ENCODE measurements at regions of chr11 and their contacts with region 1.

Region 1: DNA sequence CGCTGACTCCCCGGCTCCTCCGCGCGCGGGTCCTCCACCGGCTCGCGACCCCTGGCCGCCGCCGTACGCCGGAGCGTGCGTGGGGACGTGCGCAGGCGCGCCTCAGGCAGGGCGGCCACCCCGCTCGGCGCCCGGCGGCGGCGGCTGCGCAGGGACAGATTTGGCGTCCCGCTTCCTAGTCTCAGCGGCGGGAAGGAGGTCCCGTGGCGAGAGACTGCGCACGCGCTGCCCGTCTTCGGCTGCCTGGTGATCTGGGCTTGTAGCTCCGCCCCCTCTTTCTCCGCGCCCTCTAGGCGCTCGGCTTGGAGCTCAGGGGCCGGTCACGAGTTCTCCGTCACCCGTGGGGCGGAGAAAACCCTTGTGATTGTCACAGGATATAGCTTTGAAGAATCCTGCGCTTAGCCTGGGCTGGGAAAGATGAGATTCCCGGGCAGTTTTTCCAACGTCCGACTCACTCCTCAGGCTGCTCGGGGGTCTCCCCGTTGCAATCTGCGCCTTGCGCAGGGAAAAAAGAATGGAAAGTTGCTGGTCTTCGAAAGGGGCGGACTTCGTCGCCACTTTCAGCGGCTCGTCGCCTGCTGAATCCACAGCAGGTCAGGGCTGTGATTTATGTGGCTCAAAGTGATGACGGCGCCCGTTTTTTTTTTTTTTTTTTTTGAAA is at the start of gene PATL1:
- DNase-seq: peak; percentile 99 to 100 (median 100)
- ATAC-seq: peak; percentile 97 to 99 (median 98)
- H3K4me3 ChIP-seq: peak within 1 kb of the TSS; percentile 71 to 99 (median 90)
- H3K27ac ChIP-seq: peak within 1 kb of the TSS; percentile 82 to 99 (median 94)
- H3K4me1 ChIP-seq: peaks cover 6 to 41% (median 20%) of the 10 kb centered on the region in 12 donors
- H3K27me3 ChIP-seq: no peaks in the 10 kb centered on the region
- CTCF ChIP-seq: no peak
- POLR2A ChIP-seq: peak; percentile 9 to 89
- total RNA-seq, gene PATL1: 14.4 to 33.3 (median 24.8) TPM

Region 2: DNA sequence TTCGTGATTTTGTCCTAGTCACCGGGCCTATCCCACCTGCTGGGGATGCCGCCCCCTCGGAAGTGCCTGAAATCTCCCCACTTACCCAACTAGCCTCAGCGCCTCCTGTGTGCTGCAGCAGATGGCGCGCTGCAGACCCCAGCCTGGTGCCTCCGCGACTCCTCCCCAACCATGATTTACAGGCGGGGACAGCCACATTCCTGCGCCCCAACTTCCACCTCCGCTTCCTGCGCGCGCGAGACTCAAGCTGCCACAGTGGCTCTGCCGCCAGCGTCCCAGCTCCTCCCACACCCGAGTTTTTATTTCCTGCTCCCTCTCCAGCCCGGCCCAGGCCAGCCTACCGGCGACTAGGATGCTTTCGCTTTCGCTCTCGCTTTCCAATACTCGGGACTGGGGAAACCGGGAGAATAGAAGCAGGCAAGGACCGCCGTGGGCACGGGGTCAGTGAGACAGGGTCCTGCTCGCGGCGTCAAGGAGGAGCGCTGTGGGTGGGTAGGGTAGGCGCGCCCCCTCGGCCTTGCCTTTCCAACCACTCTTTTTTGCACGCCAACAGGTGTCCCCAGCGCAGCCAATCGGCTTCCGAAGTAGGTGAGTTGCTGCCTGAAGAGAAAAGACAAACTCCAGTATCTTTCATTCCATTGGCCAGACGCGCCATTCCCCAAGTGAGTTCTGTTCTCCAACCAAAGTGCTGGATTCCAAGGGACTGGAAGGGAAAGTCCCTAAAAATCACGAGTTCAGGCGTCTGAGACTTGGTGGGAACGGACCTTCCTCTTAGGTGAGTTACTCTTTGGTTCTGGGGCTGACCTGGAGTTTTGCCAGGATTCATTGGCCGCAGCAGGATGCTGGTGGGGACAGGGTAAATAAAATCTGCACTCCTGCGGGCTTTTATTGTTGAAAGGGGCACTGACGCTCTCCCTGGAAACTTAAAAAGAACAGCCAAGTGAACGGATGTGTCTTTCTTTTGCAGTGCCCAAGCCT is 526.3 kb before region 1 on chr11 and contains the start of gene FAM111A:
- intact Hi-C with region 1: loop called in 1 of 10 experiments (anchors 10 kb)
- DNase-seq: peak; percentile 88 to 92 (median 90)
- ATAC-seq: peak; percentile 91 to 97 (median 96)
- H3K4me3 ChIP-seq: peak within 1 kb of the TSS; percentile 45 to 90 (median 76)
- H3K27ac ChIP-seq: peak within 1 kb of the TSS; percentile 54 to 97 (median 88)
- H3K4me1 ChIP-seq: peaks cover 0 to 54% (median 19%) of the 10 kb centered on the region in 12 donors
- H3K27me3 ChIP-seq: no peaks in the 10 kb centered on the region
- CTCF ChIP-seq: peak in 9 of 12 donors; percentile 5 to 48 (median 26)
- POLR2A ChIP-seq: peak in 1 of 2 donors; percentile 45
- total RNA-seq, gene FAM111A: 4.1 to 38.3 (median 9.1) TPM

Region 3: DNA sequence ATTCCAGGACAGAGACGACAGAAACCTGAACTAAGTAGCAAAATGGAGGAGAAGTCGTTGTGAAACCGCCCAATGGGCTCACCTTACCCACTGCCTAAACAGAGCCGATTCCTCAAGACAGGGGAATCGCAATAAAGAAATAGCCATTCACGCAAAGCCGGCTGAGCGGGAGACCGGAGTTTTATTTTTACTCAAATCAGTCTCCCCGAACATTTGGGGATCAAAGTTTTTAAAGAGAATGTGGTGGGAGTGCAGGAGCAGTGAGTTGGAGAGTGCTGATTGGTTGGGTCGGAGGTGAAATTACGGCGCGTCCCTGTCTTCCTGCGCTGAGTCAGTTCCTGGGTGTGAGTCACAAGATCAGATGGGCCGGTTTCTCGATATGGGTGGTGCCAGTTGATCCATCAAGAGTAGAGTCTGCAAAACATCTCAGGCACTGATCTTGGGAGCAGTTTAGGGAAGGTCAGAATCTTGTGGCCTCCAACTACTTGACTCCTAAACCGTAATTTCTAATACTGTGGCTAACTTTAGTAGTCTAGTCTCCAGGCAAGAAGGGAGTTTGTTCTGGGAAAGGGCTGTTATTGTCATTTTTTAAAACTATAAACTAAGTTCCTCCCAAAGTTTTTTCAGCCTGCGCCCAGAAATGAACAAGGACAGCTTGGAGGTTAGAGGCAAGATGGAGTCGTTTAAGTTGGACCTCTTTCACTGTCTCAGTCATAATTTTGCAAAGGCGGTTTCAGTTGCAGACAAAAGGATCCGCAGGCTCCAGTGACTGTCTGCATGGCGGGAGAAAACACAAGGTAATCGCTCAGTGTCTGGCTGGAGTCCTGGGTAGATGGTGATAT is 123.7 kb before region 1 on chr11:
- intact Hi-C with region 1: loop called in 3 of 10 experiments (anchors 2 to 10 kb)
- DNase-seq: no peak
- ATAC-seq: no peak
- H3K4me3 ChIP-seq: no peak overlapping the region
- H3K27ac ChIP-seq: no peak overlapping the region
- H3K4me1 ChIP-seq: peaks cover 0 to 25% (median 0%) of the 10 kb centered on the region in 12 donors
- H3K27me3 ChIP-seq: no peaks in the 10 kb centered on the region
- CTCF ChIP-seq: no peak
- POLR2A ChIP-seq: no peak

Region 4: DNA sequence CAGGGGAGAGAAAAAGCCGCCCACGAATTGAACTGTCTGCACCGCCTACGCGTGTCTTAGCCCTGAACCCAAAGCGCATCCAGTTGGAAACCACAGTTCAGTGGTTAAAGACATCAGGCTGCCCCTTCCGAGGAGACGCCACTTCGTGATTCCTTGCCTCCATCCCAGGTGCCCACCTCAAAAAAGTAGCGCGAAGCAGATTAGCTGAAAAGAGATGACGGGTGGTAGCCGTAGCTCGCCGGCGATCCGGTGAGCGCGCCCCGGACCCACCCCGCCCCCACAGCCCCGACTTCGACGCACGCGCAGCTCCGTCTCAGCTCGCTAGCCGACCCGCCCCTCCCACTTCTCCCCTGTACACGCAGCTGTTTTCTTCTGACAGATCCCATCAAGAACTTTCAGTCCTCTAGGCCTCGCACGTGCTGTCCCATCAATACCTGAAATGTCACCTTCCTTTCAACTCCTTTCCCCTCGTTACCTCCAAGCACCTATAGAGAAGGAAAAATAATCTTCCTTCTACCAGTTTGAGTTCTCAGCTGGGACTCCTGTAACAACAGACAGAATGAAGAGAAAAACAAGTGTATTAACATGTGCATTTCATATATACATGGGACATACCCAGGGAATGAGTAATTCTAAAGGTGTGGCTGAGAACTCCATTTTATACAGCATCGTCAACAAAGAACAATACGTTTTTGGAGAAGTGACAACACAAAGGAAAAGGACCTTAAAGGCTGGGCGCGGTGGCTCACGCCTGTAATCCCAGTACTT is 108.2 kb before region 1 on chr11:
- intact Hi-C with region 1: loop called in 1 of 10 experiments (anchors 10 kb)
- DNase-seq: peak; percentile 88 to 91 (median 90)
- ATAC-seq: peak; percentile 83 to 92 (median 88)
- H3K4me3 ChIP-seq: peak overlapping the region; percentile 70 to 96 (median 84)
- H3K27ac ChIP-seq: peak overlapping the region; percentile 59 to 92 (median 82)
- H3K4me1 ChIP-seq: peaks cover 0 to 37% (median 7%) of the 10 kb centered on the region in 12 donors
- H3K27me3 ChIP-seq: no peaks in the 10 kb centered on the region
- CTCF ChIP-seq: no peak
- POLR2A ChIP-seq: peak in 1 of 2 donors; percentile 24

Region 5: DNA sequence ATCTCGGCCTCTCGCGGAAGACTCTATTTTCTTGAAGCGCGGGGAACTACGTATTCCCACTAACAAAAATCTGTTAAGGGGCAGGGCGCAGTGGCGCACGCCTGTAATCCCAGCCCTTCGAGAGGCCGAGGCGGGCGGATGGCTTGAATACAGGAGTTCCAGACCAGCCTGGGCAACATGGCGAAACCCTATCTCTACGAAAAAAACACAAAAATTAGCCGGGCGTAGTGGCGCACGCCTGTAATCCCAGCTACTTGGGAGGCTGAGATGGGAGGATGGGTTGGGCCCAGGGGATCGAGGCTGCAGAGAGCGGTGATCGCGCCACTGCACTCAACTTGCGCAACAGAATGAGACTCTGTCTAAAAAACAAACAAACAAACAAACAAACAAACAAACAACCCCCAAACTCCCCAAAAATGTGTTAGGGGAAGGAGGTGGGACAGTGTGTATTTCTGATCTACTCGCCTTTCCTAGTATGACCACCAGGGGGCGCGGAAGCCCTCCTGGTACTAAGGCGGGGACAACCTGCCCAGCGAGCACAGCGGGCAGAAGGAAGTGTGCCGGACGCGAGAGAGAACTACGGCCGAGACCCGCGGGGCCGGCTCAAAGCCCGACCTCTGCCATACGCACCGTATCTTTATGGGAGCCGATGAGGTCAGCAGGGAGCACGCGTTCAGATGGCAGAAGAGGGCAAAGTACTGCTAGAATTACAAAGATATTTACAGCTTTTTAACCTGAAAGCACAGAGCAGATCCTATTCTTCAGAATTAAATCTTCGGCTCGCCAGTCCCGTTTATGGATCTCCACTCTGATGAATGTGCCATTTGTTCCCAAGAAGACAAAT is 84.8 kb after region 1 on chr11:
- intact Hi-C with region 1: loop called in 1 of 10 experiments (anchors 10 kb)
- DNase-seq: peak; percentile 86 to 93 (median 89)
- ATAC-seq: peak; percentile 75 to 87 (median 81)
- H3K4me3 ChIP-seq: peak overlapping the region; percentile 74 to 99 (median 93)
- H3K27ac ChIP-seq: peak overlapping the region in 11 of 12 donors; percentile 94 to 98 (median 96)
- H3K4me1 ChIP-seq: peaks cover 0 to 21% (median 7%) of the 10 kb centered on the region in 12 donors
- H3K27me3 ChIP-seq: no peaks in the 10 kb centered on the region
- CTCF ChIP-seq: peak; percentile 88 to 98 (median 95)
- POLR2A ChIP-seq: peak in 1 of 2 donors; percentile 21

Region 6: GRCh38 chr11:59802639-59803176 is 133.6 kb after region 1 on chr11:
- intact Hi-C with region 1: loop called in 6 of 10 experiments (anchors 2 to 10 kb)
- DNase-seq: peak in 2 of 5 donors; percentile 27 to 37
- ATAC-seq: peak; percentile 59 to 81 (median 72)
- H3K4me3 ChIP-seq: peak overlapping the region in 1 of 12 donors; percentile 35
- H3K27ac ChIP-seq: peak overlapping the region in 9 of 12 donors; percentile 34 to 69 (median 58)
- H3K4me1 ChIP-seq: peaks cover 0 to 18% (median 8%) of the 10 kb centered on the region in 12 donors
- H3K27me3 ChIP-seq: no peaks in the 10 kb centered on the region
- CTCF ChIP-seq: peak; percentile 45 to 85 (median 70)
- POLR2A ChIP-seq: no peak